ENCODE measurements at regions of chr2 and their contacts with region 1.

Region 1: DNA sequence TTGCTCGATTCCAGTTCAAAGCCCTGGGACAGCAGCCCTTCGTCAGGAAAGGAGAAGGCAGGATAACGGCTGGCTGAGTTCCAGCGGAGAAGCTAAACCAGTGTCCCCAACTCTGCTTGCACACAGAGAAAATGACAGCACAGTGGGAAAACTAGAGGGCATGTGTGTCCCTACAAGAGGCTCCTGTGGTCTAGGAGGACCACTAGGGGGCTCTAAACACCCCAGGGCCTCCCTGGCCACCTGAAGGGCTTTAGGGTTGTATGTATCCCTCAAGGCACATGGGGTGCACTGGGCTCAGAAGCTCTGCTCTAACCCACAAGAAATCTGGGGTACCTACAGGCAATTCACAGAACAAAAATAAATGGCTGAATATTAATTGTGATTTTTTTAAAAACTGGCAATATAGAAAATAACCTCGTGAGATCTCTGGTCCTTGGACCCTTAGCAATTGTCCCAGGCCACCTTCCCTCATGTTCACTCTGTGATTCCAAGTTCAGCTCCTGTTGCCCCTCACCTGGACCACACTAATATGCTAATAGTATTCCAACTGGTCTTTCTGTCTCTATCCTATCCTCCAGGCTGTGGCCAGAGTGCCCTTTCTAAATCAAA is 17.5 kb downstream of the STAT1 start:
- DNase-seq: peak in 4 of 5 donors; percentile 21 to 40 (median 37)
- H3K4me3 ChIP-seq: no peak overlapping the region
- H3K4me3 Mint-ChIP-seq: no peak overlapping the region
- H3K27ac ChIP-seq: no peak overlapping the region
- H3K27ac Mint-ChIP-seq: peak overlapping the region; percentile 75 to 92 (median 83)
- H3K4me1 ChIP-seq: peaks cover 11% of the 10 kb centered on the region
- H3K4me1 Mint-ChIP-seq: peaks cover 32 to 63% (median 36%) of the 10 kb centered on the region in 4 donors
- H3K27me3 ChIP-seq: no peaks in the 10 kb centered on the region
- H3K27me3 Mint-ChIP-seq: no peaks in the 10 kb centered on the region

Region 2: DNA sequence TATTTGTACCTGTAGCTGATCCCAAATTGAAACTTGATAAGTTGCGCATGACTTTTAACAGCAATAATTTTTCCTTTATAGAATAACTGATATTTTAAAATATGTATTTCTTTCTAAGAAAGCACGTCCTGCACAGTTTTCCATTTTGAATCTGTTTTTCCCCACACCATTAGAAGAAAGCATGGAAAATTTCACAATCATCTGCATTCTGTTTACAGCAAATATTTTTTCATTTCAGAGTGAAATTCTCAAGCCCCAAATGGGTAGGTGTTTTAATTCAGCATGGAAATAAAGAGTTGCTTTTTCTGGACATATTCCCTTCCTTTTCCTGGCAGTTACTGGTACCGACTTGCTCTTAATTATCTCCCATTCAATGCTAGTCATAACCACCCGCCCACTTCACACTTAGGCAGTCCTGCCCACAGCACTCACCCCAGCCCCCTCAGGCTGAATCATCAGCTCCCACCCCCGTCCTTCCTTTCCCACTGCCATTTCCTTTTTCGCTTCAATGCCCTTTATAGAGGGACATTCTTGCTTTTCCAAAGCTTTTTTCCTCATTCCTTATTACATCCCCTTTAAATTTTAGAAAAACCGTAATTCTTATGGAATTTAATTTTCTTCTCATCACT is 205.0 kb before region 1 on chr2:
- CTCF ChIA-PET with region 1: no interaction called
- POLR2A ChIA-PET with region 1: no interaction called
- intact Hi-C with region 1: no loop called
- DNase-seq: no peak
- H3K4me3 ChIP-seq: no peak overlapping the region
- H3K4me3 Mint-ChIP-seq: no peak overlapping the region
- H3K27ac ChIP-seq: no peak overlapping the region
- H3K27ac Mint-ChIP-seq: no peak overlapping the region
- H3K4me1 ChIP-seq: no peaks in the 10 kb centered on the region
- H3K4me1 Mint-ChIP-seq: peaks cover 3 to 7% (median 5%) of the 10 kb centered on the region in 4 donors
- H3K27me3 ChIP-seq: no peaks in the 10 kb centered on the region
- H3K27me3 Mint-ChIP-seq: no peaks in the 10 kb centered on the region

Region 3: DNA sequence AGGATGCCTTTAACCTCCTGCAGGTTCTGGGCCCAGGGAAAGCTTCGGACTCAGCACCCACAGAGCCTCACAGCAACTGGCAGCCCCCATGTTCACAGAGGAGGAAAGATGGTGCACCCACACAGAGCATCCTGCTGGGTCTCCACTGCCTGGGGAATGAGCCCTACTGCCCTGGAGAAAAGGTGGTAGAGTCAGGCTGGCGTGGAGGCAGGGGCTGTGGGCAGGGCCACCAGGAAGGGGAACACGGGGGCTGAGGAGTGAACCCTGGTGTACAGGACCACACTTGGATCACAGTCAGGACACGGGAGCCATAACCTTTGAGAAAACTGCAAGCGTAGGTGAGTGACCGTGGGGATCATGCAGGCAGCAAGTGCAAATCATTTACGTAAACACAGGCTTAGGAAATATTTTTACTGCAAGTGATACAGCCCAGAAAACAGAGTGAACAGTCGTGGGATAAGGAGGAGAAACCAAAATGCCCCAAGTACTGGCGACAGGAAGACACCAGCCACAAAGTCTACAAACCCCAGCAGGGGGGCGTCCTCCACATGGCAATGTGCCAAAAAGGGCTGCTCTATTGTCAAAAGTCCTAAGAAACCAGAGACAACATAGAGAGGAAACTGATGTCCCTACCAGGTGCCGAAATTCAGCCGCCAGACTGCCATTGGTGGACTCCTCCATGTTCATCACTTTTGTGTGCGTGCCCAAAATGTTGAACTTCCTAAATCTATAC is 10.1 kb before region 1 on chr2:
- CTCF ChIA-PET with region 1: interaction called, 8 read pairs
- POLR2A ChIA-PET with region 1: no interaction called
- intact Hi-C with region 1: loop called (anchors 2 kb)
- DNase-seq: no peak
- H3K4me3 ChIP-seq: no peak overlapping the region
- H3K4me3 Mint-ChIP-seq: no peak overlapping the region
- H3K27ac ChIP-seq: no peak overlapping the region
- H3K27ac Mint-ChIP-seq: peak overlapping the region in 5 of 7 donors; percentile 46 to 75 (median 66)
- H3K4me1 ChIP-seq: peaks cover 13% of the 10 kb centered on the region
- H3K4me1 Mint-ChIP-seq: peaks cover 14 to 30% (median 21%) of the 10 kb centered on the region in 4 donors
- H3K27me3 ChIP-seq: no peaks in the 10 kb centered on the region
- H3K27me3 Mint-ChIP-seq: no peaks in the 10 kb centered on the region

Region 4: DNA sequence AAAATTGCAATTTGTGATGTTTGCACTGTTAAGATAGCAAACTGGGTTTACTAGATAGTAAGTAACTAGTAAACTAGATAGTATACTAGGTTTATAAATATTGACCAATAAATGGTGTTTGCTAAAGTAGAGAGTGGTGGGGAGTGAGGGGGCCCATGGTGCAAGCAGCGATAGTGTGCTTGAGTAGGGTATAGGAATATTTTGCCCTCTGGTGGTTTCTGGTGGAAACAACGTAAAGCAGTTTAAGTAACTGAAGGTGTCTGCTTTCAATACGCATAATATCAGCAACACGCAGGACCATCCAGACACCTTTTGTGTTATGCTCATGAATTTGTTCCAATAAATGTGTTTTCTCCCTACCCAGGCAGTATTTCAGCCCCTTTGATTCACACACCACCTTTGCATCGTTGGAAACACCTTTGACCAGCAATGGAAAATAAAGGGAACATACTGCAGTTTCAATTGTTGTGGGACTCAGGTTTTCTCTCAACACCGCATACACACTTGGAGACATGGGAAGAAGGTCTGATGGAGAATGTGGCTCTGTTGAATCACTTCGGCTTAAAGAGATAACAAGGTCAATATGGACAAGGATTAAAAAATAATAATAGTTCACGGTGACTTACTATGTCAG is 34.2 kb after region 1 on chr2:
- CTCF ChIA-PET with region 1: interaction called, 19 read pairs
- POLR2A ChIA-PET with region 1: no interaction called
- intact Hi-C with region 1: loop called (anchors 1 kb)
- DNase-seq: peak; percentile 52 to 69 (median 56)
- H3K4me3 ChIP-seq: no peak overlapping the region
- H3K4me3 Mint-ChIP-seq: peak overlapping the region in 4 of 8 donors; percentile 1 to 47 (median 7)
- H3K27ac ChIP-seq: peak overlapping the region; percentile 21
- H3K27ac Mint-ChIP-seq: peak overlapping the region; percentile 15 to 84 (median 44)
- H3K4me1 ChIP-seq: peaks cover 34% of the 10 kb centered on the region
- H3K4me1 Mint-ChIP-seq: peaks cover 21 to 37% (median 30%) of the 10 kb centered on the region in 4 donors
- H3K27me3 ChIP-seq: no peaks in the 10 kb centered on the region
- H3K27me3 Mint-ChIP-seq: no peaks in the 10 kb centered on the region

Measured in CD4-positive, alpha-beta memory T cell (primary cell).